Activated CD4-positive, alpha-beta T cell treated with anti-CD3 and anti-CD28 coated beads for 36 hours (primary cell): ENCODE measurements at regions of chr4 and their contacts with region 1.

Region 1: GRCh38 chr4:88284439-88285234 is at the start of gene PPM1K:
- DNase-seq: peak; percentile 100
- ATAC-seq: peak; percentile 88
- H3K4me3 Mint-ChIP-seq: peak within 1 kb of the TSS; percentile 96
- H3K27ac Mint-ChIP-seq: peak within 1 kb of the TSS; percentile 100
- H3K4me1 Mint-ChIP-seq: peaks cover 35% of the 10 kb centered on the region
- H3K27me3 Mint-ChIP-seq: no peaks in the 10 kb centered on the region
- total RNA-seq, gene PPM1K: 44.2 to 53.4 TPM

Region 2: DNA sequence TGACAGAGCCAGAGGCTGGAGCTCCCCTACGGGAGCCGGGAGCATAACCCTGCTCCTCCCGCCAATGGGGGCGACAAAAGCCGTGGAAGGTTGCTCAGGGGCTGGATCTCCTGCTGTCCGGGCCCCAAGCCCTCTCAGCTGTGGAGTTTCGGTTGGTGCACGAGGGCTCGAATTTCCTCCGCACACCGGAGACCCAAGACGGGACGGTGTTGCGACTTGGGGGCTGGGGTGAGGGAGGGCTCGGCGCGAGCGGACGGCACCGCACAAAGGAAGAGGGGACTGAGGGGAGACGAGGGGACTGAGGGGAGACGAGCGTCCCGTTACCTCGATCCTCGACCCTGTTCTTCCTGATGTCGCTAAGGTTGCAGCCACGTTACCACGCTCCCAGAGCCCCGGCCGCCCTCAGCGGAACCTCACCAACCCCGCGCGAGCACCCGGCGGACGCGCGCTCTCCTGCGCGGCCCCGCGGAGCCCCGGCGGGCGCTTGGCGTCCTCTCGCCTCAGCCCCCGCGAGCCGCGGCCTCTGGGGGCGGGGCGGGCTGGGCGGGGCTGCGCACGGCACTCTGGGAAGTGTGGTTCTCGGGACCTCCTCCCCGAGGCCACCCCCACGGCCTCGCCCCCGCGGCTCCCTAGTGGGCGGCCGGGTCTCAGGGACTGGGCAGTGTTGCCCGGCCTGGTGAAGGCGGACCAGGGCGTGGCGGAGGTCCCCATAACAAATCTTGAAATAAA is 1064.4 kb before region 1 on chr4 and contains the start of gene KLHL8:
- CTCF ChIA-PET with region 1: no interaction called
- POLR2A ChIA-PET with region 1: no interaction called
- intact Hi-C with region 1: loop called in 1 of 2 experiments (anchors 5 kb)
- DNase-seq: peak; percentile 92
- ATAC-seq: peak; percentile 91
- H3K4me3 Mint-ChIP-seq: peak within 1 kb of the TSS; percentile 89
- H3K27ac Mint-ChIP-seq: peak within 1 kb of the TSS; percentile 92
- H3K4me1 Mint-ChIP-seq: peaks cover 17% of the 10 kb centered on the region
- H3K27me3 Mint-ChIP-seq: peaks cover 2% of the 10 kb centered on the region
- total RNA-seq, gene KLHL8: 9.8 to 10.3 TPM

Region 3: GRCh38 chr4:88007304-88008121 is 277.1 kb before region 1 on chr4 and contains the start of gene PKD2:
- CTCF ChIA-PET with region 1: no interaction called
- POLR2A ChIA-PET with region 1: no interaction called
- intact Hi-C with region 1: loop called in 1 of 2 experiments (anchors 1 kb)
- DNase-seq: peak; percentile 89
- ATAC-seq: peak; percentile 92
- H3K4me3 Mint-ChIP-seq: peak within 1 kb of the TSS; percentile 84
- H3K27ac Mint-ChIP-seq: peak within 1 kb of the TSS; percentile 72
- H3K4me1 Mint-ChIP-seq: peaks cover 32% of the 10 kb centered on the region
- H3K27me3 Mint-ChIP-seq: peaks cover 5% of the 10 kb centered on the region
- total RNA-seq, gene PKD2: 4.1 to 5.0 TPM

Region 4: DNA sequence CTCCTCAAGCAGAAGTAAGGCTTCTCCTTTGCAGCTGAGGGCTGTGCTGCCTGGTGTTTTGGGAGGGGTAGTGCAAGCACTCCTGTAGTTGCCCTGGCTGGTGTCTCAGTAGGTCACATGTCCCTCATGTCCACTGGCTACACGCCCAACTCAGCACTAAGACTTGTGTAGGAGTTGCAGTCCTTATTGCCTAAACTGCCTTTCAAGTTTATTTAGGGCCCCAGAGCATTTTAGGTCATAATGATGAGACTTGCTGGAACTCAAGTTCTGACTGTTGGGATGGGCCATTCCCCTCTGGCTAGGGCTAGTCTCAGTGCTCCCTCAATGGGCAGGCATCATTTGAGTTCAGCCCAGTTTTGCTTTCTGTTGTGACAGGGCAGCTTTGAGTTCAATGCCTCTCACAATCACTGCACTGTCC is 44.3 kb before region 1 on chr4:
- CTCF ChIA-PET with region 1: no interaction called
- POLR2A ChIA-PET with region 1: no interaction called
- intact Hi-C with region 1: no loop called
- DNase-seq: no peak
- ATAC-seq: no peak
- H3K4me3 Mint-ChIP-seq: no peak overlapping the region
- H3K27ac Mint-ChIP-seq: no peak overlapping the region
- H3K4me1 Mint-ChIP-seq: peaks cover 6% of the 10 kb centered on the region
- H3K27me3 Mint-ChIP-seq: no peaks in the 10 kb centered on the region

Region 5: GRCh38 chr4:88378691-88379559 is 94.3 kb after region 1 on chr4 and contains the start of gene HERC6:
- CTCF ChIA-PET with region 1: interaction called, 3 read pairs
- POLR2A ChIA-PET with region 1: interaction called, 3 read pairs
- intact Hi-C with region 1: loop called (anchors 1 kb)
- DNase-seq: peak; percentile 88
- ATAC-seq: peak; percentile 47
- H3K4me3 Mint-ChIP-seq: peak within 1 kb of the TSS; percentile 75
- H3K27ac Mint-ChIP-seq: peak within 1 kb of the TSS; percentile 84
- H3K4me1 Mint-ChIP-seq: peaks cover 39% of the 10 kb centered on the region
- H3K27me3 Mint-ChIP-seq: no peaks in the 10 kb centered on the region
- total RNA-seq, gene HERC6: 7.3 to 9.3 TPM

Region 6: GRCh38 chr4:88591787-88592599 is 307.4 kb after region 1 on chr4 and contains the start of gene HERC3:
- CTCF ChIA-PET with region 1: interaction called, 3 read pairs
- POLR2A ChIA-PET with region 1: interaction called, 3 read pairs
- intact Hi-C with region 1: loop called (anchors 1 to 5 kb)
- DNase-seq: peak; percentile 92
- ATAC-seq: peak; percentile 87
- H3K4me3 Mint-ChIP-seq: peak within 1 kb of the TSS; percentile 90
- H3K27ac Mint-ChIP-seq: peak within 1 kb of the TSS; percentile 90
- H3K4me1 Mint-ChIP-seq: peaks cover 43% of the 10 kb centered on the region
- H3K27me3 Mint-ChIP-seq: no peaks in the 10 kb centered on the region
- total RNA-seq, gene HERC3: 26.2 to 41.8 TPM

Region 7: DNA sequence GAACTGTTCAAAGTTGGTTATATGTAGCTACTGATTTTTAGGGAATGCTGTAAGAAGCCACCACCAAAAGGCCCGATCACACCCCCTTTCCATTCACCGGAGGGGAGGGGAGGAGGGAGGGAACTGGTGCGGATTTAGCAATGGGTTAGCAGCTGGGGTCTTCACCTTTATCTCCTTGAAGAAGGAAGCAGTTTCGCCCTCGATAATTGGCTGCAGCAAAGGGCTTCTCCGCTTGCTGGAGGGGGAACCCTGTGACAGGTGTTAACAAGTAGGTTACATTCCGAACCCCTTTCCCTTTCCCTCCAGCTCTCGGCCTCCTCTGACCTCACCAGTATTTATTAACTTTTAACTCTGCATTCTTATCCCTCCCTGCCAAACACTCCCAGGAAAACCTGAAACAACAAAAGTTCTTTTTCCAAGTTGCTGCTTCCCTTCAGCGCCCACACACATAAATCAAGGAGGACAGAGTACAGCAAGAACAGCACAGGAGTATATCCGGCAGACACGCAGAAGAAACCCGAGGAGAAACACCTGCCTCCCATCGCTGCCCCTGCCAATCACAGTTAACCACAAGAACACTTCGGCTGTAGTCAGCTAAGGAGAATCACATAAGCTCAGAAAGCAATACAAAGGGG is 452.8 kb after region 1 on chr4:
- CTCF ChIA-PET with region 1: no interaction called
- POLR2A ChIA-PET with region 1: no interaction called
- intact Hi-C with region 1: no loop called
- DNase-seq: peak; percentile 55
- ATAC-seq: peak; percentile 84
- H3K4me3 Mint-ChIP-seq: peak overlapping the region; percentile 48
- H3K27ac Mint-ChIP-seq: peak overlapping the region; percentile 55
- H3K4me1 Mint-ChIP-seq: peaks cover 18% of the 10 kb centered on the region
- H3K27me3 Mint-ChIP-seq: no peaks in the 10 kb centered on the region

Region 8: GRCh38 chr4:88823058-88823919 is 538.7 kb after region 1 on chr4:
- CTCF ChIA-PET with region 1: no interaction called
- POLR2A ChIA-PET with region 1: no interaction called
- intact Hi-C with region 1: loop called in 1 of 2 experiments (anchors 2 kb)
- DNase-seq: peak; percentile 83
- ATAC-seq: peak; percentile 96
- H3K4me3 Mint-ChIP-seq: peak overlapping the region; percentile 77
- H3K27ac Mint-ChIP-seq: peak overlapping the region; percentile 88
- H3K4me1 Mint-ChIP-seq: peaks cover 38% of the 10 kb centered on the region
- H3K27me3 Mint-ChIP-seq: no peaks in the 10 kb centered on the region